Spleen (tissue), 13 donors: ENCODE measurements at regions of chr5 and their contacts with region 1.

Region 1: DNA sequence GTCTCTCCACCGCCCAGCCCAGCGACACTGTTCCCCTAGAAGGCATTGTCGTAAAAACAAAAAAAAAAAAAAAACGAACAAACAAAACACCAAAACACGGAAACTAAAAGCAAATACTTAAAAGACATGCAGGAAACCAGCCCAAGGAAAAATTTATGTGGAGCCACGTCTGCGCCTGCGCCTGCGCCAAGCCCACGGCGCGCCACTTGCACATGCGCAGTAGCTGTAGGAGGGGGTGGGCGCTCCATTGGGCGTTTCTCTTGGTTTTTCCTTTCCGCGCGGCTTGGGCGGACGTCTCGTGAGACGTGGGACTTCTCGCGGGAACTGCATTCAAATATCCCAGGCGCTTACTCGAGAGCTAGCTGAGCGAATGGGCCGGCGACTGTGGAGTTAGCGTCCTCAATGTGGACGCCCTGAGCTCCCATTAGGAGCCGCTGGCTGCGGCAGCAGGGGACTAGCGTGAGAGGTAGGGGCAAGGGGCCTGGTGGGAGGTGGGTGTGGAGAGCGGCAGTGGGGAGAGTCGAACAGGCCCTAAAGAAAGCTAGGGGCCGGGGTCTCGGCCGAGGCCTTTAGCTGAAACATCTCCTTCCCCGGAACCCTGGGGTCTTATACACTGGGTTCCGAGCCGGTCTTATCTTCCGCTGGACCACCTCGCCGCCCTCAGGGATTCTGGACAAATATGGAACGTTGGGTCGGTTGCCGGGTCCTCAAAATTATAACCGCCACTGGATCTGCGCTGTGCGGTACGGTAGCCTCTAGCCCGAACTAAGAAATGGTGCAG is at the start of gene SPDL1:
- DNase-seq: peak; percentile 97
- H3K4me3 ChIP-seq: peak within 1 kb of the TSS; percentile 55 to 89 (median 74)
- H3K27ac ChIP-seq: peak within 1 kb of the TSS in 7 of 8 donors; percentile 51 to 85 (median 83)
- H3K4me1 ChIP-seq: peaks cover 0 to 31% (median 19%) of the 10 kb centered on the region in 6 donors
- H3K27me3 ChIP-seq: no peaks in the 10 kb centered on the region
- CTCF ChIP-seq: peak in 3 of 11 experiments; percentile 18 to 46 (median 40)
- POLR2A ChIP-seq: peak in 1 of 3 donors; percentile 62
- total RNA-seq, gene SPDL1: 9.0 to 15.7 (median 12.2) TPM

Region 2: GRCh38 chr5:168679515-168679920 is 904.1 kb before region 1 on chr5:
- intact Hi-C with region 1: loop called (anchors 10 kb)
- DNase-seq: peak; percentile 79
- H3K4me3 ChIP-seq: no peak overlapping the region
- H3K27ac ChIP-seq: no peak overlapping the region
- H3K4me1 ChIP-seq: peaks cover 13 to 47% (median 32%) of the 10 kb centered on the region in 6 donors
- H3K27me3 ChIP-seq: no peaks in the 10 kb centered on the region
- CTCF ChIP-seq: peak; percentile 39 to 89 (median 78)
- POLR2A ChIP-seq: no peak

Region 3: DNA sequence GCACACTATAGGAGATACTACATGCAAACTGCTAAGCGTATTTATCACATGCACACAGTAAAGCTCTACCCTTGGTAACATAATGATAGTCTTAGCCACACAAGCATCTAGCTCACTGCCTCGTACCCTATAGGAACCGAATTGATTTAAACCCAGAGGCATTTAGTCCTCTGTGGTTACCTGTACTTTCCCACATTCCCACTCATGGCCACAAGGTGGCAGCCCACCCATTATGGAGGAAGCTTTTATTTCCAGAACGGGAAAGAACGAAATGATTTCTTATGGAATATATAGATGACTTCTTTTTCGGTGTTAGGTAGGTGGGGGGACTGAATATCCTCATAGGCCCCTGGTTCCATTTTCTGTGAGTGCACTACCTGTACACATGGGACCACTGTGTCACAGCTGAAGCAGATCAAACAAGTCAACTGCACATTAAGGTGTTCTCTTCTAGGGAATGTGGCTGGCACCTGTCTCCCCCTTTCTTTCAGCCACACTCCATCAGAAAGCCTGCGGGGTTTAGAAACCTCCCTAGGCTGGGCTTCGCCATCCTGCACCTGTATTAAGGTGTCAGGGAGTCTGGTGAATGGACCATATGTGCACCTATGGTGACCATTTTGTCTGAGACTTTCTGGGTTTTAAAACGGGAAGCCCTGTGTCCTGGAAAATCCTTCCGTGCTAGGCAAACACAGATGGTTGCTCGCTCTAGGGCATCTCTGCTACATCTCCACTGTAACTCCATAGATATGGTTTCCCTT is 595.9 kb before region 1 on chr5:
- intact Hi-C with region 1: loop called (anchors 10 kb)
- DNase-seq: no peak
- H3K4me3 ChIP-seq: no peak overlapping the region
- H3K27ac ChIP-seq: no peak overlapping the region
- H3K4me1 ChIP-seq: peaks cover 0 to 17% (median 6%) of the 10 kb centered on the region in 6 donors
- H3K27me3 ChIP-seq: peaks cover 0 to 27% (median 0%) of the 10 kb centered on the region in 7 donors
- CTCF ChIP-seq: peak; percentile 43 to 86 (median 77)
- POLR2A ChIP-seq: no peak

Region 4: GRCh38 chr5:169686137-169686536 is 102.5 kb after region 1 on chr5:
- intact Hi-C with region 1: no loop called
- DNase-seq: no peak
- H3K4me3 ChIP-seq: no peak overlapping the region
- H3K27ac ChIP-seq: no peak overlapping the region
- H3K4me1 ChIP-seq: no peaks in the 10 kb centered on the region
- H3K27me3 ChIP-seq: no peaks in the 10 kb centered on the region
- CTCF ChIP-seq: no peak
- POLR2A ChIP-seq: no peak